Activated CD4-positive, alpha-beta memory T cell treated with anti-CD3 and anti-CD28 coated beads, Interleukin-2, amount 10 ng/mL, durations not matched to agents 7 days and 5 days (primary cell): ENCODE measurements at regions of chr3 and their contacts with region 1.

Region 1: GRCh38 chr3:189961525-189962161 is 159.1 kb downstream of the P3H2 start:
- DNase-seq: peak; percentile 74
- H3K4me3 Mint-ChIP-seq: no peak overlapping the region
- H3K27ac Mint-ChIP-seq: no peak overlapping the region
- H3K4me1 Mint-ChIP-seq: peaks cover 9% of the 10 kb centered on the region
- H3K27me3 Mint-ChIP-seq: peaks cover 16% of the 10 kb centered on the region

Region 2: DNA sequence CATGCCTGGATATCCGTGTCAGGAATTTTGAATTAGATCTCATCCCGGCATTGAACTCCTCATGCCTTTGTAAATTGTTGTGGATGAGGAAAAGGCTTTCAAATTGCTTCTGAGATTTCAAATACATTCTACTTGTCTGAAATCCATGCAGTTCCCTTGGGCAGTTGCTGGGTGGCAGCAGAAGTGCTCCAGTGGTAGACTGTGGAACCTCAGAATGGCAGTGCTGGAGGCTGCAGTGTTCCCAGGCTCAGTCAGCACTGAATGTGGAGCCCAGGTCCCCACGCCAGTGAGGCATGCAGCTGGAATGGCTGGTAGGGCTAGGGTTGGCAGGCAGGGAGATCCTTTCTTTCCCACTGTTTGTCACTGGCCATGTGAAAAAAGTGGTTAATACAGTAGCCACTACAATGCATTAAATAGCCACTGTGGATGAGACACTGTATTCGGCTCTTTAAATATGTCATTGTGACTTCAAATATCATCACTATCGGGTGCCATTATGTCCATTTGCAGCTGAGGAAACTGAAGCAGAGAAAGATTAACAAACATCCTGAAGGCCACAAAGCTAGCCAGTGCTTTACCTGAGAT is 691.3 kb before region 1 on chr3:
- CTCF ChIA-PET with region 1: interaction called, 10 read pairs
- POLR2A ChIA-PET with region 1: no interaction called
- DNase-seq: peak; percentile 56
- H3K4me3 Mint-ChIP-seq: no peak overlapping the region
- H3K27ac Mint-ChIP-seq: no peak overlapping the region
- H3K4me1 Mint-ChIP-seq: peaks cover 13% of the 10 kb centered on the region
- H3K27me3 Mint-ChIP-seq: no peaks in the 10 kb centered on the region

Region 3: DNA sequence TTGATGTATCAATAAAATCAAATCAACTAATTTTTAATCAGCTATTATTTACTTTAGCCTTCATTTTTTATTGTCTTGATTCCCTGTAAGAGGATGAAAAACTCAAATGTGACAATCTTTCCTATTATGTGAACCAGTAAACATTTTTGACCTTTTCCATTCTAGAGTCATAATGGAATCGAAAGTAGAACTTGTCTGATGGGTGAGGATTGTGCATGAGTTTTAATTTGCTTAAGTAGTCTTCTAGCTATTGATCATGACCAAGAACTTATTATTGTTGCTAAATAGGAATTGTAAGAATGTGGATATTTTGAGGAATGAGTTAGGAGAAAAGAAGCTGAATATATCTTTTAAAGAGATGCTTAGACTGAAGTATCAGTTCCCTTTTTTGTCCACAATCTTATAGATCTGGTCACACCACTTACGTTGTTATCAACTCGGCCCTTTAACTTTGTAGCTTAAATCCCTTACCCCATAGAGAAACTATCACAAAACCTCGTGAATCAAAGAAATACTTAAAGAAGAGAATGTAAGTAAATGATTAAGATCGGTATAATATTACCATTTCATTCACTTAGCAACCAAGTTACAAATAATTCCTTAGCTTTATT is 183.2 kb before region 1 on chr3:
- CTCF ChIA-PET with region 1: no interaction called
- POLR2A ChIA-PET with region 1: no interaction called
- DNase-seq: no peak
- H3K4me3 Mint-ChIP-seq: no peak overlapping the region
- H3K27ac Mint-ChIP-seq: no peak overlapping the region
- H3K4me1 Mint-ChIP-seq: no peaks in the 10 kb centered on the region
- H3K27me3 Mint-ChIP-seq: no peaks in the 10 kb centered on the region

Region 4: GRCh38 chr3:189947948-189948723 is 13.5 kb before region 1 on chr3:
- CTCF ChIA-PET with region 1: interaction called, 21 read pairs
- POLR2A ChIA-PET with region 1: no interaction called
- DNase-seq: no peak
- H3K4me3 Mint-ChIP-seq: no peak overlapping the region
- H3K27ac Mint-ChIP-seq: no peak overlapping the region
- H3K4me1 Mint-ChIP-seq: peaks cover 4% of the 10 kb centered on the region
- H3K27me3 Mint-ChIP-seq: peaks cover 8% of the 10 kb centered on the region

Region 5: DNA sequence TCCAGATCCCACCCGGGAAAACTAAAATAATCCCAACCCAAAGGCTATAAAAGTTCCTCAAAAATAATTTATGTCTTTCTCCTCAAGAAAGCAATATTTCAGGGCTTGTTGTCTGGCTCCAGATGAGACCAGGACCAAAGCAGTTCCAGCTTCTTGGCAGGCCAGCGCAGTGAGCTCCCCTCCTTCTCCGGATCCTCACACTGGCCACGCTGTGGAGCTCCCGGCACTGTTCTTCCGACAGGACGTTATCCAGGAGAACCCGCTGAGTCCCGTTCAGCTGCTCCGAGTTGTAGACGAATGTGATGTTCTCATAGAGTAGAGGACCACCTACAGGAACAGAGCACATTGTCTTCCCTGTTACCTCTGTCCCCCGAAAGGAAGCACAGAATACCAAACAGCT is 12.7 kb after region 1 on chr3:
- CTCF ChIA-PET with region 1: interaction called, 17 read pairs
- POLR2A ChIA-PET with region 1: no interaction called
- DNase-seq: no peak
- H3K4me3 Mint-ChIP-seq: no peak overlapping the region
- H3K27ac Mint-ChIP-seq: no peak overlapping the region
- H3K4me1 Mint-ChIP-seq: no peaks in the 10 kb centered on the region
- H3K27me3 Mint-ChIP-seq: peaks cover 14% of the 10 kb centered on the region

Region 6: GRCh38 chr3:190012314-190012782 is 50.7 kb after region 1 on chr3:
- CTCF ChIA-PET with region 1: no interaction called
- POLR2A ChIA-PET with region 1: no interaction called
- DNase-seq: no peak
- H3K4me3 Mint-ChIP-seq: no peak overlapping the region
- H3K27ac Mint-ChIP-seq: no peak overlapping the region
- H3K4me1 Mint-ChIP-seq: no peaks in the 10 kb centered on the region
- H3K27me3 Mint-ChIP-seq: peaks cover 14% of the 10 kb centered on the region

Region 7: DNA sequence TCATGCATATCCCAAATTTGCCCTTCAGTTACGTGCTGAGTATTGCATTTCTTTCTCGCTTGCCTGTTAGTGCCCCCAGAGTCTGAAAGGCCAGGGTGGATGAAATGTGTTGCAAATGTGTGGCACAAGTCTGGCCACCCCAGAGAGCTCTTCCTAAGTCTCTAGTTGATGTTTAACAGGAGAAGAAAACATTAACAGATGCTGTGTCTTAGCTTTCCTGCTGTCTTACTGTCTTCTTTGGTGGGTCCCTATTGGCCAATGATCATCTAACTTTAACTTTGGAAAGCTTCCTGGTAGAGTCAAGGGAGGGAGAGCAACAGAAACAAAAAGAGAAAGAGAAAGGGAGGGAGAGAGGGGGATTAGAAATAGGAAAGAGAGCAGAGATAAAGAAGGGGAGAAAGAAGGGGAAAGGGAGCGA is 235.7 kb after region 1 on chr3:
- CTCF ChIA-PET with region 1: interaction called, 15 read pairs
- POLR2A ChIA-PET with region 1: no interaction called
- DNase-seq: no peak
- H3K4me3 Mint-ChIP-seq: no peak overlapping the region
- H3K27ac Mint-ChIP-seq: no peak overlapping the region
- H3K4me1 Mint-ChIP-seq: peaks cover 2% of the 10 kb centered on the region
- H3K27me3 Mint-ChIP-seq: peaks cover 3% of the 10 kb centered on the region

Region 8: GRCh38 chr3:190205739-190206138 is 244.1 kb after region 1 on chr3:
- CTCF ChIA-PET with region 1: interaction called, 15 read pairs
- POLR2A ChIA-PET with region 1: no interaction called
- DNase-seq: no peak
- H3K4me3 Mint-ChIP-seq: no peak overlapping the region
- H3K27ac Mint-ChIP-seq: no peak overlapping the region
- H3K4me1 Mint-ChIP-seq: peaks cover 10% of the 10 kb centered on the region
- H3K27me3 Mint-ChIP-seq: peaks cover 3% of the 10 kb centered on the region

Region 9: GRCh38 chr3:190321789-190322603 is 360.4 kb after region 1 on chr3 and contains the start of gene CLDN1:
- CTCF ChIA-PET with region 1: interaction called, 12 read pairs
- POLR2A ChIA-PET with region 1: no interaction called
- DNase-seq: peak; percentile 68
- H3K4me3 Mint-ChIP-seq: peak within 1 kb of the TSS; percentile 51
- H3K27ac Mint-ChIP-seq: no peak within 1 kb of the TSS
- H3K4me1 Mint-ChIP-seq: peaks cover 12% of the 10 kb centered on the region
- H3K27me3 Mint-ChIP-seq: peaks cover 36% of the 10 kb centered on the region
- total RNA-seq, gene CLDN1: not detected